ENCODE measurements at regions of chr2 and their contacts with region 1.

Region 1: DNA sequence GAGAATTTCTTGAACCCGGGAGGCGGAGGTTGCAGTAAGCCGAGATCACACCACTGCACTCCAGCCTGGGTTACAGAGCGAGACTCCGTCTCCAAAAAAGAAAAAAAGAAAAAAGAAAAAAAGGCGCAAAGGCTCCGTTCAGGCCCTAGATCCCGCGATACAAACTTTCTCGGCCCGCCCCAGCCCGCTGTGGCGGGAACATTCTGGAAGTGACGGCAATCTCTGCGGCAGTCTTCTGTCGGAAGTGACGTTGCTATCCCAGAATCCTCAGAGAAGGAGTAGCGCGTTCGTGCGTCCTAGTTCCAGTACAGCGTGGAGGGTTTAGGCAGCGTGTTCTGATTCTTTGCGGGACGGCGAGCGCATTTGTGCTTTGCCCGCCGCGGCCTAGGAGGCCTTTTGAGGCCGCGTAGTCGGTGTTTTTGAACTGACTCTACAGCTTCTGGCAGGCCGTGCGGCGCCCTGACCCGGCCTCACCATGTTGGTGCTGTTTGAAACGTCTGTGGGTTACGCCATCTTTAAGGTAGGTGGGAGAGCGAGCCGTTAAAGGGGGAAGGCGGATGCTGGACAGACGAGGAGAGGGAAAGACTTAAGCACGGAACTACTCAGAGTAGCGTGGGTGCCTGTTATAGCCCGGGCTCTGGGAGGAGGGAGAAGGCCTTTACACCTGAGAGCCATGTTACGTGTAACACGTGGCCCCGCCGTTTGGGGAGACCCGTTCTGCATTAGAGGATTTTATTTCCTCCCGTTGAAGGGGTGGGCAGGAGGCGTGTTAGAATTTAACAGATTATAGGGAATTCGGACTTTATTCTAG is at the start of gene NOP58:
- DNase-seq: peak; percentile 97
- H3K4me3 ChIP-seq: peak within 1 kb of the TSS; percentile 90
- H3K27ac ChIP-seq: peak within 1 kb of the TSS; percentile 87
- H3K4me1 ChIP-seq: peaks cover 31% of the 10 kb centered on the region
- CTCF ChIP-seq: no peak
- total RNA-seq, gene NOP58: 124 and 145 TPM in 2 replicates

Region 2: DNA sequence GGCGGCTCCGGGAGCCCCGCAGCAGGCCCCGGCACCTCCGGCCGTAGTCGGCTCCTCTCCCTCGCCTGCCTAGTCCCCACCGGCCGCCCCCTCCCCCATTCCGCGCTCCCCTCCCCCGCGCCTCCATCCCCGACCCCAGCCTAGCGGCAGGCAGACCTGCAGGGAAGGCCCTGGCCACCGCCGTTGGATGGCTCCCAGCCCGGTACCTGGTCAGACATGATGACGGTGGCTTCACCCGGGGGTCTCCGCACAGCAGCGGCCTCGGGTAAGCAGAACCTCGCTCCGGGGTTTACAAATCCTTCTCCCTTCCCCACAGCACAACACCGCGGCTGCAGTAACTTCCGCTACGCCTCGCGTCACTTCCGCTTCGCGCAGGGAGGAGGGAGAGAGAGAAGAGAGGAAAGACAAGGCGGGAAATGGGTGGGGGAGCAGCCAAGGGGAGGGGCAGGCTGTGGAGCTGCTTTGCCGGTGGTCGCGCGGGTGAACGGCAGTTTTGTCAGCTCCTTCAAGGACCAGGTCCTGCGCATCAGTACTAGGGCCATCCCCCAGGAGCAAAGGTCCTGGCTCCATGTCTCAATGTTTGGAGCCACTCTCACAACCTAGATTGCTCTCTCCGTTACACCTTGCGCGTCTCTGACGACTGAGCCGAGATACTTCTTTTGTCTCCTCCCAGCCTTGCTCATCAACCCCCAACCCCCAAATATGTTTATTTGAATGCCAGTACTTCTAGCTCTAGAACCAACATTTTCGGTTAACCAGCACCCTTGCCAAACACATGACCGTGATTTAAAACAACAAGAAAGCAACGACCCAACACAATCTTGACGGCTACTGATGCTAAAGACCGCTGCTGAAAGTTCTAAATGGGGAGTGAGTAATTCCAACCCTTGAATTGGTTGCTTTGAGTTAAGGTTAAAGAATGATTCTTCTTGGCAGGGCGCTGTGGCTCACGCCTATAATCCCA is 27.2 kb before region 1 on chr2 and contains the start of gene SUMO1:
- CTCF ChIA-PET with region 1: no interaction called
- POLR2A ChIA-PET with region 1: interaction called, 5 read pairs
- intact Hi-C with region 1: loop called (anchors 1 kb)
- DNase-seq: peak; percentile 92
- H3K4me3 ChIP-seq: peak within 1 kb of the TSS; percentile 90
- H3K27ac ChIP-seq: peak within 1 kb of the TSS; percentile 43
- H3K4me1 ChIP-seq: peaks cover 17% of the 10 kb centered on the region
- CTCF ChIP-seq: no peak
- total RNA-seq, gene SUMO1: 69.8 and 86.6 TPM in 2 replicates

Region 3: GRCh38 chr2:202375609-202376408 is 110.1 kb after region 1 on chr2 and contains the start of gene BMPR2:
- CTCF ChIA-PET with region 1: no interaction called
- POLR2A ChIA-PET with region 1: interaction called, 4 read pairs
- intact Hi-C with region 1: loop called (anchors 5 kb)
- DNase-seq: peak; percentile 84
- H3K4me3 ChIP-seq: peak within 1 kb of the TSS; percentile 91
- H3K27ac ChIP-seq: peak within 1 kb of the TSS; percentile 47
- H3K4me1 ChIP-seq: peaks cover 24% of the 10 kb centered on the region
- CTCF ChIP-seq: no peak
- total RNA-seq, gene BMPR2: 3.2 and 4.3 TPM in 2 replicates